OCI-LY7 (cell line): ENCODE measurements at regions of chr15 and their contacts with region 1.

Region 1: GRCh38 chr15:34987985-34988873 is at the start of gene ZNF770:
- DNase-seq: peak; percentile 86
- H3K4me3 ChIP-seq: peak within 1 kb of the TSS; percentile 98
- H3K27ac ChIP-seq: peak within 1 kb of the TSS; percentile 63
- H3K4me1 ChIP-seq: peaks cover 34% of the 10 kb centered on the region
- CTCF ChIP-seq: no peak
- total RNA-seq, gene ZNF770: 12.8 and 15.5 TPM in 2 replicates

Region 2: GRCh38 chr15:34223904-34224596 is 764.2 kb before region 1 on chr15:
- CTCF ChIA-PET with region 1: no interaction called
- POLR2A ChIA-PET with region 1: no interaction called
- intact Hi-C with region 1: loop called (anchors 5 kb)
- DNase-seq: peak; percentile 7
- H3K4me3 ChIP-seq: peak overlapping the region; percentile 99
- H3K27ac ChIP-seq: peak overlapping the region; percentile 45
- H3K4me1 ChIP-seq: peaks cover 18% of the 10 kb centered on the region
- CTCF ChIP-seq: no peak

Region 3: DNA sequence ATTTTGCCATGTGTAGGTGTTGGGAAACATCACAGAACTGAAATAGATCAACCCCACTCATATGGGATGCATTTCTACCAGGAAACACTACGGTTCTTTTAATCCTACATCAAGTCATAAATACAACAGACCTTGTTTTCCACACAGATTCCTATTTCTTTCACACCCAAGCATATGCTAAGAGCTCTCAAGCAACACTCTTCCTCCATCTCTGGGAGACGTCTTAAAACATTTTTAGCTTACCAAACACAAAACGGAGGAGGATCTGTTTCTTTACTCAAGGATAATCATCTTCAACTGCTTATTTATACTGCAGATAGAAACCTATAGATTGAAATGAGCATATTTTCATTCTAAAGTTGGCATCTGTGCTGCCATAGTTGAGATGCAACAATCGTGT is 238.5 kb before region 1 on chr15:
- CTCF ChIA-PET with region 1: no interaction called
- POLR2A ChIA-PET with region 1: no interaction called
- intact Hi-C with region 1: no loop called
- DNase-seq: no peak
- H3K4me3 ChIP-seq: no peak overlapping the region
- H3K27ac ChIP-seq: no peak overlapping the region
- H3K4me1 ChIP-seq: no peaks in the 10 kb centered on the region
- CTCF ChIP-seq: no peak

Region 4: GRCh38 chr15:34969340-34970097 is 18.7 kb before region 1 on chr15 and contains the start of gene AQR:
- CTCF ChIA-PET with region 1: interaction called, 4 read pairs
- POLR2A ChIA-PET with region 1: interaction called, 39 read pairs
- intact Hi-C with region 1: loop called (anchors 2 kb)
- DNase-seq: peak; percentile 97
- H3K4me3 ChIP-seq: peak within 1 kb of the TSS; percentile 100
- H3K27ac ChIP-seq: peak within 1 kb of the TSS; percentile 40
- H3K4me1 ChIP-seq: peaks cover 18% of the 10 kb centered on the region
- CTCF ChIP-seq: peak; percentile 81
- total RNA-seq, gene AQR: 18.5 and 20.3 TPM in 2 replicates